GM10248 (cell line): ENCODE measurements at regions of chr1 and their contacts with region 1.

Region 1: DNA sequence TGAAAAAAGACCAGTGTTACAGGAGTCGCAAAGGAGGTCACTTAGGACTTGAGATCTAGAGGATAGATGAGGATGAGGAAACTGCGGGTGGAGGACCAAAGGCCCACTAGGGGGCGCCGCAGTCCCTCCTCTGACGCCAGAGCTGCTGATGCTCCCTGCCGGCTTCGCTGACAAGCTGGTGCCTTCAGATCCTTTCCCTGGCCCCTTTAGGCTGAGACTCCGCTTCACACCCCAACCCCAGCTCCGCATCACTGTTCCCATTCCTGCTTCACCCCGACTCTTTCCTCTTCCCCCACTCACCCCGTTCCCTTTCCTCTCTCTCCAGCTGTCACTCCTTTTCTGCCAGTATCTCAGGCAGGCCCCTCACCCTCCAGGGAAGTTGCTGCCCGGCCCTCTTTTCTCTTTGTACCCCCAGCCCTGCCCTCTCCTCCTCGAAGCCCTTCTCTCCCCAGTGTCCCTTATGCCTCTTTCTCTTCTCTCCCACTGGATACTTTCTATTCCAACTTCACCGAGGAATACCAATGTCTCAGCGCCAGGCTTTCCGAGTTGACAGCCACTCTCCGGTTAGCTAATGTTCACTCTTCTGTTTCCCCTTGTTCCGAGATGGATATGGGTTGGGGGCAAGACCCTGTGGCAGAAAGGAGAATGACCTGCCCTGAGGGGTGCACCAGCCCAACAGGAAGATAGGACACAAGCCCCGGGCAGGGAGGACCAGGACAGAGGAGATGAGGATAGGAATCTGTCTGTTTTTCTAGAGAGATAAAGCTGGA is 4.5 kb downstream of the KCNJ9 start:
- DNase-seq: peak; percentile 89
- CTCF ChIP-seq: peak; percentile 71

Region 2: GRCh38 chr1:159953536-159954515 is 132.0 kb before region 1 on chr1 and contains the start of gene SLAMF9:
- CTCF ChIA-PET with region 1: no interaction called
- POLR2A ChIA-PET with region 1: no interaction called
- DNase-seq: no peak
- CTCF ChIP-seq: no peak

Region 3: DNA sequence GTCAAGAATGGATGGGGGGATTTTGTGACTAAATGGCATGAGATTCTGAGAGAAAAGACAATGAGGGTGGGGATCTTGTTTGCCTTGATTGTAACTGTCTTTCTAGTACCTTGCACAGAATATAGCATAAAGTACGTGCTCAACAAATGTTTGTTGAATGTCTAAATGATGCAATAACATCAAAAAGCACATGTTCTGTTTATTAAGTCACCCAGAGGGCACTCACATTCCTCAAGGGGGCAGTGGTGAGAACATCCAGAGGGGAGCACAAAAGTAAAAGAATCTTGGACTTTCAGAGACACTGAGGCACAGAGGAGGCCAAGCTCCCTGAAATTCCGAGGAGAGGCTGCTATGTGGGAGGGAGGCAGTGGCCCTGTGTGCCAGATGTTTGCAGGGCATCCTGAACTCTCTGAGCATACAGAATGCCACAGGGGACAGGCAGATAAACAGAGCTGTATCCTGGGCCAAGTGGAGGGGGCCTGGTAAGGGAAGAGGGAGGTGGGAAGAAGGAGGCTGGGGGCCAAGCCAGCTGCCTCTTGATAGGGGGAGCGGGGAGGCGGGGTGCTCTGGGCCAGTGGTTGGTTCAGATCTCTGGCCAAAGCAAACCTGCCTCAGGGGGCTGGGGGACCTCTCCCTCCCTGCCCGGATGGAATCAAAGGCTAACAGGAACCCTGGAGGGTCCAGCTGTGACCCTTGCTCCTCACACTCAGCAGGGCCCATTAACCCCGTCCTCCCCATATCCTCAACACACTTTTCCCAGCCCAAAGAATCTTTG is 23.2 kb after region 1 on chr1:
- CTCF ChIA-PET with region 1: interaction called, 45 read pairs
- POLR2A ChIA-PET with region 1: no interaction called
- DNase-seq: peak; percentile 60
- CTCF ChIP-seq: peak; percentile 35

Region 4: GRCh38 chr1:160315359-160315758 is 229.5 kb after region 1 on chr1:
- CTCF ChIA-PET with region 1: no interaction called
- POLR2A ChIA-PET with region 1: no interaction called
- DNase-seq: no peak
- CTCF ChIP-seq: no peak

Region 5: DNA sequence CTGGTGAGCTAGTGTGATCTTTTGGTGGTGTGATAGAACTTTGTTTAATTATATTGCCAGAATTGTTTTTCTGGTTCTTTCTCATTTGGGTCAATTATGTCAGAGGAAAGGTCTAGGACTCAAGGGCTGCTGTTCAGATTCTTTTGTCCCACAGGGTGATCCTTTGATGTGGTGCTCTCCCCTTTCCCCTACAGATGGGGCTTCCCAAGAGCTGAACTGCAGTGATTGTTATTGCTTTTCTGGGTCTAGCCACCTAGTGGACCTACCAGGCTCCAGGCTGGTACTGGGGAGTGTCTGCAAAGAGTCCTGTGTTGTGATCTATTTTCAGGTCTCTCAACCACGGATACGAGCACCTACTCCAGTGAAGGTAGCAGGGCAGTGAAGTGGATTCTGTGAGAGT is 519.3 kb after region 1 on chr1:
- CTCF ChIA-PET with region 1: no interaction called
- POLR2A ChIA-PET with region 1: no interaction called
- DNase-seq: no peak
- CTCF ChIP-seq: no peak